Colonic mucosa (tissue), 4 donors: ENCODE measurements at regions of chr12 and their contacts with region 1.

Region 1: DNA sequence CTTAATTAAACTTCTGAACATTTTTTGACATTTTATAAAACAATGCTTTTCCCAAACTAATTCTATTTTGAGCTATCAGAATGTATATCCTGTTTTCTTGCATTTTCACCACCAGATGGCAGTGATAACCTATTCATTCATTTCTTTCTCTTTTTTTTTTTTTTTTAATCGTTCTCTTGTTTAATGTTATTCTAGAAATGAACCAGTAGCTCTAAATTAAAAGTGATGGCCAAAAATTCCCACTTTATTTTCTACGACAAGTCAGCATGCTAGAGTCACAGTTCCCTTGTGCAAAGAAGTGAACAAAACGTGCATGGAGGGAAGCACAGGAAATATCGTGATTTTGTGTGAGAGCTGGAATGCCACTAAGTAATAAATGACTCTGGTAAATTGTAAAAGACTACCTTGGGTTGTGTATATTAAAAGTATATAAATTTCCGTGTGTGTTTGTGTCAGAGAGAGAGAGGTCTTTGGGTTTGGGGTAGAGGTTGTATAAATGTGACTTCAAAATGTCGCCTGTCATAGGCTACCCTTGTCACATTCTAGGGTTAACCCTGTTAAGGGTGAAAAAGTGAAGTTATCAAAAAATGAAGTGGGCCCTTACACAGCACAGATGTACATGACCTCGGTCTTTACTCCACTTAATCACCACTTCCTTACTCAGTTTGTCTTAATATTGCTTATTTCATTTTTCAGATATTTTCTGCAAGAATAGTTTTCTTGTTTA is 40.4 kb upstream of the LDHB start:
- DNase-seq: no peak
- H3K4me3 ChIP-seq: no peak overlapping the region
- H3K27ac ChIP-seq: no peak overlapping the region
- H3K4me1 ChIP-seq: no peaks in the 10 kb centered on the region
- H3K27me3 ChIP-seq: no peaks in the 10 kb centered on the region
- CTCF ChIP-seq: peak; percentile 41

Region 2: DNA sequence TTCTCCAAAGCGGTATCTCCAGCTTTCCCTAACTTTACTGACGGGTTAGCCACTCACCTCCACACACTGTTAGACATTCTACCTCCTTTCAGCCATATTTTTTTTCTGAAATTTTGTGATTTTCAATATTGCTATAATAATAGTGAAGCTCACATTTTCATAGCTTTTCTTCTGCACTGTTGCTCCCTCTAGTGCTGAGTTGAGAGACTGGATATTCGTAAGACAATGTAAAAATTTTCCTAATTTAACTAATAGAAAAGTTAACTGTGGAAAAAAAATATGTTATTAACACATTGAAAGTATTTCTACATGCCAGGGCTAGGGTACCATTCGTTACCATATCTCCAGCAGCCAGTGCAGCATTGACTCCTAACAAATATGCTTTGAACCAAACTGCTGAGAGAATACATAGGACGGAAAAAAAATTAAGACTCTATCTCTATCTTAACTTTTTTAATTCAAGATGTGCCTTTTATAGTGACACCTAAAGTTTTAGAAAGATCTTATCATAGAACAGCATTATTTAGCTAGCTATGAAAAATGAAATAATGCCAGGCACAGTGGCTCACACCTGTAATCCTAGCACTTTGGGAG is 291.8 kb after region 1 on chr12:
- intact Hi-C with region 1: loop called (anchors 2 kb)
- DNase-seq: no peak
- H3K4me3 ChIP-seq: no peak overlapping the region
- H3K27ac ChIP-seq: no peak overlapping the region
- H3K4me1 ChIP-seq: peaks cover 4% of the 10 kb centered on the region
- H3K27me3 ChIP-seq: no peaks in the 10 kb centered on the region
- CTCF ChIP-seq: peak; percentile 36

Region 3: DNA sequence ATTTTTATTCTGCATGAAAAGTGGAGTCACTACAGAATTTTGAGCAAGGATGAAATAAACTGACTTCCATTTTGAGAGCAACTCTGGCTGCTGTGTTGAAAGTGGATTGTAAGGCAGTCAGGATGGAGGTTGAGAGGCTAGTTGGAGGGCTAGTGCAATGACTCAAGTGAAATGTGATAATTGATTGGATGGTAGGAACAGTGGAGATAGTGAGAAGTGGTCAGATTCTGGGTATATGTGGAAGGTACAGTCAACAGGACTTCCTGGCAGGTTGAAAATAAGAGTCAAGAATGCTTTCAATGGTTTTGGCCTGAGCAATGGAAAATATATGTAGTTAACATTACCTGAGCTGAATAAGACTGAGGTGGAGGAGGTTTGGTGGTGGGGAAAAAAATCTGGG is 318.9 kb after region 1 on chr12:
- intact Hi-C with region 1: loop called (anchors 2 kb)
- DNase-seq: no peak
- H3K4me3 ChIP-seq: no peak overlapping the region
- H3K27ac ChIP-seq: no peak overlapping the region
- H3K4me1 ChIP-seq: no peaks in the 10 kb centered on the region
- H3K27me3 ChIP-seq: no peaks in the 10 kb centered on the region
- CTCF ChIP-seq: no peak